CD8-positive, alpha-beta T cell (primary cell): ENCODE measurements at regions of chr3 and their contacts with region 1.

Region 1: DNA sequence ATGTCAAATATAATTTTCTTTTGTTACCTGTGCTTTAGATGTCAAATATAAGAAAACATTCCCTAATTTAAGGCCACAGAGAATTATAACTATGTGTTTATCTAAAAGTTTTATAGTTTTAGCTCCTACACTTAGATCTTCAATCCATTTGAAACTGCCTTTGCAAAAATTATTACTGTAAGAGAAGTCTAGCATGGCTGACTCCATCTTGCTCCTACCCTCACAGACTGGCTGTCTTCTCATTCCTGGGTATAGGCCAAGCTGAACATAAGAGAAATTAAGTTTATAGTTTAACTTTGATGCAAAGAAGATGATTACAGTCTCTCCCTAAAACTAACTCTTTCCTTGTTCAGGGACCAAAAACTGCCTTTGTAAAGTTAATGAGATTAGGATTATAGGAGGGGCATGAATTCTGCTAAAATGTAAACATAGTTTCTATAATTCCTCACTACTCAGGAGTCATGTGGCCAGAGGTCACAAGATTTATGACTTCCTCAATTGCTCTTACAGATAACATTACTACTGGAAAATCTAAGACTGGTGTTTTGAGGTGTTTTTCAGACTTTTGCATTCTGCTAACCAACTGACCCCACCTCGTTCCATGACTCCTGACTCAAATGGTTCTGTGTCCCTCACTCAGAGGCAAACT is 184.0 kb downstream of the BCHE start:
- DNase-seq: no peak
- ATAC-seq: no peak
- H3K4me3 ChIP-seq: no peak overlapping the region
- H3K4me3 Mint-ChIP-seq: no peak overlapping the region
- H3K27ac ChIP-seq: no peak overlapping the region
- H3K27ac Mint-ChIP-seq: no peak overlapping the region
- H3K4me1 ChIP-seq: no peaks in the 10 kb centered on the region
- H3K4me1 Mint-ChIP-seq: no peaks in the 10 kb centered on the region
- H3K27me3 ChIP-seq: no peaks in the 10 kb centered on the region
- H3K27me3 Mint-ChIP-seq: no peaks in the 10 kb centered on the region
- CTCF ChIP-seq: no peak

Region 2: DNA sequence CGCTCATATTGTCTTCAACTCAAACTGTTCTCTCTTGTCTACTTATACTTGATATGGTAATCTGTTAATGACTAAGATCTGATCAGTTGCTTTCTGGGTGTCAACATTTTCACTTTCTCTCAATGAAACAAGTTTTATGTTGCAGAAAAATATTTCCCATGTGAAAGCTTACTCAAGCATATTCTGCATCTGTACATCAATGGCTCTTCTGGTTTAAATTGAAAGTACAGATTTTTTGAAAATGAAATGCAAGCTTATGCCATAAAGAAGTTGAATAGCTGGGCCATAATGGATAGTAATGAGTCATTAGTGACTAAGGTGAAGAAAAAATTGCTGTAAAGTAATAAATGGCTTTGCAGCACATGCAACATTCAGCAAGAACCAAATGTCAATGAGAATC is 43.2 kb after region 1 on chr3:
- CTCF ChIA-PET with region 1: no interaction called
- POLR2A ChIA-PET with region 1: no interaction called
- intact Hi-C with region 1: loop called in 1 of 2 experiments (anchors 2 kb)
- DNase-seq: no peak
- ATAC-seq: no peak
- H3K4me3 ChIP-seq: no peak overlapping the region
- H3K4me3 Mint-ChIP-seq: no peak overlapping the region
- H3K27ac ChIP-seq: no peak overlapping the region
- H3K27ac Mint-ChIP-seq: no peak overlapping the region
- H3K4me1 ChIP-seq: no peaks in the 10 kb centered on the region
- H3K4me1 Mint-ChIP-seq: no peaks in the 10 kb centered on the region
- H3K27me3 ChIP-seq: no peaks in the 10 kb centered on the region
- H3K27me3 Mint-ChIP-seq: no peaks in the 10 kb centered on the region
- CTCF ChIP-seq: no peak